Ovary (tissue), 10 donors: ENCODE measurements at regions of chr1 and their contacts with region 1.

Region 1: DNA sequence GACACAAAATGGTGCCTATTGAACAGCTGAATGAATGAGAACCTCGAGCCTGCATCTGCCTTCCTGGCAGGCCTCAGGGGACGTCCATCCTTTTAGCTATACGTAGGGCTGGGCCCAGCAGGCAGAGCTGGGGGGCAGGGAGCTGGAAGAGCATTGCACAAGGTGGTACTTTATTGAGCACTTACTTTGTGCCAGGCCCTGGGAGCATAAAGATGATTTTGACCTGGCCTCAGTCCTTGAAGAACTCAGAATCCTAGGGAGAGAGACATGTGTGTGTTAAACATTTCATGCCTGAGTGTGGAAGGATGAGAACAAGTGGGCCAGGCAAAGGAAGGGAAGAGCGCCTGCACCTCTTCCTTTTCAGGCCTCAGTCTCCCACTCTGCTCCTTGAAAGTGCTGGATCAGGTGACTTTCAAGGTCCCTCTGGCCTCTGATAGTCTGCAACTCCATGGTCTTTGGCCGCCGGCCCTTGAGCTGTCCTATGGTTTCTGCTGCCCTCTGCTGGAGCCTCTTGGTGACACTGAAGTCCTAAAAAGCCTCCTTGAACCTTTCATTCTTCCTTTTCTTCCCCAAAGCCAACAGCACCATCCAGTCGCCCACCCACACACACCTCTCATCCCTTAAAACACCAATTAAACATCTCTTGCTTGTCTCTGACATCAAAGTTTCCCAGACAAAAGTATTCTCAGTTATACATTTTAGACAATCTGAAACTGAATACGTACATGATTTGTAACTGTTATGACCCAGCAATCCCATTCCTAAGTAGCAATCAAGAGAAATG is 3.5 kb upstream of the PEAR1 start:
- DNase-seq: peak; percentile 75 to 86 (median 82)
- H3K4me3 ChIP-seq: no peak overlapping the region
- H3K27ac ChIP-seq: no peak overlapping the region
- H3K4me1 ChIP-seq: peaks cover 11% of the 10 kb centered on the region
- H3K27me3 ChIP-seq: no peaks in the 10 kb centered on the region
- CTCF ChIP-seq: peak; percentile 48 to 65 (median 49)
- EP300 ChIP-seq: no peak
- POLR2A ChIP-seq: no peak

Region 2: GRCh38 chr1:156407344-156407743 is 482.6 kb before region 1 on chr1:
- intact Hi-C with region 1: no loop called
- DNase-seq: no peak
- H3K4me3 ChIP-seq: no peak overlapping the region
- H3K27ac ChIP-seq: no peak overlapping the region
- H3K4me1 ChIP-seq: no peaks in the 10 kb centered on the region
- H3K27me3 ChIP-seq: no peaks in the 10 kb centered on the region
- CTCF ChIP-seq: no peak
- EP300 ChIP-seq: no peak
- POLR2A ChIP-seq: no peak

Region 3: DNA sequence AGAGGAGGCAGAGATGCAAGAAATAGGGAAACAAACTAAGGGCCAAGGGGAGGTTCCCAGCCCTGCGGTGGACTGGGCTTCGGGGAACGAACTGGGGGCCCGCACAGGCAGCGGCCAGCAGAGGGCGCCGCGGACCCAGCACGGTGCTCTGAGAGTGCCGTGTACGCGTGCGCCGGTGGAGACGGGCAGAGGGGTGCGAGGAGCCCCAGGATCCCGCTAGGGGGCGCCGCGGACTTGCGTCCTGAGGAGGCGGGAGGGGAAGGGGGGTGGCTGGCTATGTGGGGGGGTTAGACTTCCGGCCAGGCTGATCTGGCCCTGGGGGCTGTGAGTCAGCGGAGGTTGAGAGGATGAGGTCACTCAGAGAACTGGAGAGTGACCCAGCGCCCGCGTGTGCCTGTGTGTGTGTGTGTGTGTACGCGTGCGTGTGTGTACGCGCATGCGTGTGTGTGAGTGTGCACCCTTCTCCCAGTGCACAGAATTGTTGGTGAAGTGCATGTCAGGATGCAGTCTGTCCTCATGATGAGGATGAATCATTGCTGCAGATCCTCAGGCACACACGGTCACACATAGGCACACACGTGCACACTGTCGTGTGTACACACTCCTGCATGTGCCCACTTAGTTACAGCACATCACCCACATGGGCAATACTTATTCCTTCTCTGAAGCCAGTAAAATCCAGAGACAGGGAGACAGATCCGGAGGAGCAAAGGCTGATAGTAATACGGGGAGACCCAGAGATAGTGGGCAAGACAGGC is 229.8 kb before region 1 on chr1:
- intact Hi-C with region 1: no loop called
- DNase-seq: peak; percentile 97 to 98 (median 97)
- H3K4me3 ChIP-seq: no peak overlapping the region
- H3K27ac ChIP-seq: peak overlapping the region; percentile 22 to 52
- H3K4me1 ChIP-seq: no peaks in the 10 kb centered on the region
- H3K27me3 ChIP-seq: no peaks in the 10 kb centered on the region
- CTCF ChIP-seq: peak; percentile 88 to 97 (median 97)
- EP300 ChIP-seq: no peak
- POLR2A ChIP-seq: peak; percentile 10

Region 4: GRCh38 chr1:156705918-156706656 is 183.9 kb before region 1 on chr1:
- intact Hi-C with region 1: loop called in 1 of 4 experiments (anchors 10 kb)
- DNase-seq: peak; percentile 67 to 83 (median 82)
- H3K4me3 ChIP-seq: peak overlapping the region; percentile 43
- H3K27ac ChIP-seq: peak overlapping the region; percentile 69 to 81
- H3K4me1 ChIP-seq: peaks cover 14% of the 10 kb centered on the region
- H3K27me3 ChIP-seq: no peaks in the 10 kb centered on the region
- CTCF ChIP-seq: peak; percentile 74 to 88 (median 76)
- EP300 ChIP-seq: no peak
- POLR2A ChIP-seq: peak; percentile 31

Region 5: GRCh38 chr1:156773607-156774006 is 116.4 kb before region 1 on chr1:
- intact Hi-C with region 1: loop called in 1 of 4 experiments (anchors 10 kb)
- DNase-seq: no peak
- H3K4me3 ChIP-seq: no peak overlapping the region
- H3K27ac ChIP-seq: no peak overlapping the region
- H3K4me1 ChIP-seq: peaks cover 10% of the 10 kb centered on the region
- H3K27me3 ChIP-seq: no peaks in the 10 kb centered on the region
- CTCF ChIP-seq: no peak
- EP300 ChIP-seq: no peak
- POLR2A ChIP-seq: no peak

Region 6: GRCh38 chr1:157117527-157118057 is 227.6 kb after region 1 on chr1:
- intact Hi-C with region 1: no loop called
- DNase-seq: no peak
- H3K4me3 ChIP-seq: no peak overlapping the region
- H3K27ac ChIP-seq: no peak overlapping the region
- H3K4me1 ChIP-seq: no peaks in the 10 kb centered on the region
- H3K27me3 ChIP-seq: no peaks in the 10 kb centered on the region
- CTCF ChIP-seq: no peak
- EP300 ChIP-seq: no peak
- POLR2A ChIP-seq: no peak